ENCODE measurements at regions of chr6 and their contacts with region 1.

Region 1: GRCh38 chr6:106085984-106086813 is at the start of gene PRDM1:
- DNase-seq: peak; percentile 53 to 94 (median 76)
- ATAC-seq: peak; percentile 85
- H3K4me3 ChIP-seq: peak within 1 kb of the TSS; percentile 44 to 45
- H3K4me3 Mint-ChIP-seq: peak within 1 kb of the TSS; percentile 84
- H3K27ac ChIP-seq: no peak within 1 kb of the TSS
- H3K27ac Mint-ChIP-seq: peak within 1 kb of the TSS; percentile 38
- H3K4me1 ChIP-seq: peaks cover 27% of the 10 kb centered on the region
- H3K4me1 Mint-ChIP-seq: peaks cover 70% of the 10 kb centered on the region
- H3K27me3 ChIP-seq: peaks cover 0 to 24% of the 10 kb centered on the region in 2 experiments
- H3K27me3 Mint-ChIP-seq: peaks cover 42% of the 10 kb centered on the region
- CTCF ChIP-seq: no peak
- total RNA-seq, gene PRDM1: 35.5 to 38.4 TPM

Region 2: DNA sequence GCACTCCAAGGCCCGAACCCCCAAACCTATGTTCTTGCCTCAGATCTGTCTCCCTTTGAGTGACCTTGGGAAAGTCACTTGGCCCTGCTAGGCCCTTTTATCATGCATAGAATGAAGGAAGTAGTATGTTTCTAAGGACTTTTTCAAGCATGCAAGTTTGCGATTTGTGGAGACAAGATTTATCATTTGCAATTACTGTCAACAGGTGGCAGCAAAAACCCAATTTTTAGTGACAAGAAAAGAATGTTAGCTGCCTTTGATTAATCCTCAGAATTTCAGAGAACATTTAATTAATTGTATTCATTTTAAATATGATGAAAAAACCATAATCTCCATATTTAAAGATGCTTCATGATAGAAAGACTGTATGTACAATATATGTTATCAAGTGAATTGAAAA is 655.0 kb before region 1 on chr6:
- CTCF ChIA-PET with region 1: interaction called, 3 read pairs
- POLR2A ChIA-PET with region 1: no interaction called
- intact Hi-C with region 1: loop called in 1 of 2 experiments (anchors 5 kb)
- DNase-seq: peak in 3 of 9 experiments; percentile 21 to 74 (median 68)
- ATAC-seq: no peak
- H3K4me3 ChIP-seq: no peak overlapping the region
- H3K4me3 Mint-ChIP-seq: no peak overlapping the region
- H3K27ac ChIP-seq: no peak overlapping the region
- H3K27ac Mint-ChIP-seq: no peak overlapping the region
- H3K4me1 ChIP-seq: no peaks in the 10 kb centered on the region
- H3K4me1 Mint-ChIP-seq: no peaks in the 10 kb centered on the region
- H3K27me3 ChIP-seq: no peaks in the 10 kb centered on the region
- H3K27me3 Mint-ChIP-seq: no peaks in the 10 kb centered on the region
- CTCF ChIP-seq: peak; percentile 79

Region 3: GRCh38 chr6:105484238-105485161 is 601.7 kb before region 1 on chr6:
- CTCF ChIA-PET with region 1: interaction called, 3 read pairs
- POLR2A ChIA-PET with region 1: no interaction called
- intact Hi-C with region 1: loop called (anchors 1 to 5 kb)
- DNase-seq: peak in 2 of 9 experiments; percentile 56 to 64
- ATAC-seq: peak; percentile 50
- H3K4me3 ChIP-seq: no peak overlapping the region
- H3K4me3 Mint-ChIP-seq: peak overlapping the region; percentile 60
- H3K27ac ChIP-seq: peak overlapping the region in 1 of 2 experiments; percentile 18
- H3K27ac Mint-ChIP-seq: peak overlapping the region; percentile 86
- H3K4me1 ChIP-seq: no peaks in the 10 kb centered on the region
- H3K4me1 Mint-ChIP-seq: peaks cover 24% of the 10 kb centered on the region
- H3K27me3 ChIP-seq: no peaks in the 10 kb centered on the region
- H3K27me3 Mint-ChIP-seq: peaks cover 2% of the 10 kb centered on the region
- CTCF ChIP-seq: peak; percentile 85

Region 4: GRCh38 chr6:106060167-106060566 is 26.0 kb before region 1 on chr6:
- CTCF ChIA-PET with region 1: no interaction called
- POLR2A ChIA-PET with region 1: no interaction called
- intact Hi-C with region 1: no loop called
- DNase-seq: no peak
- ATAC-seq: no peak
- H3K4me3 ChIP-seq: no peak overlapping the region
- H3K4me3 Mint-ChIP-seq: no peak overlapping the region
- H3K27ac ChIP-seq: no peak overlapping the region
- H3K27ac Mint-ChIP-seq: no peak overlapping the region
- H3K4me1 ChIP-seq: peaks cover 19% of the 10 kb centered on the region
- H3K4me1 Mint-ChIP-seq: peaks cover 17% of the 10 kb centered on the region
- H3K27me3 ChIP-seq: peaks cover 0 to 2% of the 10 kb centered on the region in 2 experiments
- H3K27me3 Mint-ChIP-seq: peaks cover 2% of the 10 kb centered on the region
- CTCF ChIP-seq: no peak

Region 5: DNA sequence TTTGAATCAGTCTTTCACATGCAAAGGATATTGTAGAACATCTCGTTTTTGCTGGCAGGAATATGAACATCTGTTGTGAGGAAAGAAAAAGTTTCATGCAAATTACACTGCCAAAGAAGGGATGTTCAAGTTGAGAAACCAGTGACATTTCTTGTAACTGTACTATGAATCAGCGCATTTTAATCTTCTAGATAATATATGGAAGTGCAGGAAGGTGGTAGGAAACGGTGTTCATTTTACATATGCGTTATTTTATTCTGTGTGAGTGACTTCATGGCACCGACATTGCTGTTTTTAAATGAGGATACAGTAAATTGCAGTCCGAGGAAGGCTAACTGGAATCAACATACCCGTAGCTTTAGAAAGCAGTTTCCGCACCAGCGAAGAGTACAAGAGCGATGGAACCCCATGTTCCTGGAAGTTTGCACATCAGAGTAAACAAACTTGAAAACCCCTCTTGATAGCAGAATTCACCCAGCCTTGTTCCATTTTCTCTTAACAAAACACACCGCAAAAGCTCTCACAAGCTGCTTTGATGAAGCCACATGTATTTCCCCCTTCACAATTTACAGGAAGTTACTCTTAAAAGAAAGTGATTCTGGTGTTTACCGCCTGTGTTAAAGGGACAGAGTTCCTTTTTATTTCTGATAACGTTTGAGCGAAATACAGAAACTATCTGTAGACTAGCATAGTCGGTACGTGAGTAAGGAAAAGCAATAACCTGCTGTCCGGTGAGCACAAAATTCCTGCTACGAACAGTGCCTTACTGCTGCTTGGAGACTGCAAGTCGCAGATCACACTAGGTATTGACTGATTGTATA is 11.4 kb after region 1 on chr6:
- CTCF ChIA-PET with region 1: interaction called, 16 read pairs
- POLR2A ChIA-PET with region 1: interaction called, 9 read pairs
- intact Hi-C with region 1: loop called in 1 of 2 experiments (anchors 1 kb)
- DNase-seq: peak in 7 of 9 experiments; percentile 37 to 93 (median 66)
- ATAC-seq: peak; percentile 65
- H3K4me3 ChIP-seq: peak overlapping the region; percentile 49 to 73
- H3K4me3 Mint-ChIP-seq: peak overlapping the region; percentile 90
- H3K27ac ChIP-seq: peak overlapping the region; percentile 42 to 79
- H3K27ac Mint-ChIP-seq: peak overlapping the region; percentile 92
- H3K4me1 ChIP-seq: peaks cover 39% of the 10 kb centered on the region
- H3K4me1 Mint-ChIP-seq: peaks cover 75% of the 10 kb centered on the region
- H3K27me3 ChIP-seq: no peaks in the 10 kb centered on the region
- H3K27me3 Mint-ChIP-seq: peaks cover 4% of the 10 kb centered on the region
- CTCF ChIP-seq: no peak

Region 6: GRCh38 chr6:106223300-106223930 is 137.2 kb after region 1 on chr6:
- CTCF ChIA-PET with region 1: interaction called, 31 read pairs
- POLR2A ChIA-PET with region 1: interaction called, 5 read pairs
- intact Hi-C with region 1: loop called (anchors 1 to 2 kb)
- DNase-seq: peak; percentile 39 to 85 (median 74)
- ATAC-seq: peak; percentile 84
- H3K4me3 ChIP-seq: no peak overlapping the region
- H3K4me3 Mint-ChIP-seq: no peak overlapping the region
- H3K27ac ChIP-seq: no peak overlapping the region
- H3K27ac Mint-ChIP-seq: no peak overlapping the region
- H3K4me1 ChIP-seq: no peaks in the 10 kb centered on the region
- H3K4me1 Mint-ChIP-seq: peaks cover 6% of the 10 kb centered on the region
- H3K27me3 ChIP-seq: no peaks in the 10 kb centered on the region
- H3K27me3 Mint-ChIP-seq: no peaks in the 10 kb centered on the region
- CTCF ChIP-seq: peak; percentile 84